Activated B cell treated with CpG ODN at 0.5 μM for 24 hours (primary cell): ENCODE measurements at regions of chr6 and their contacts with region 1.

Region 1: GRCh38 chr6:144181639-144182038 is 31.3 kb downstream of the STX11 start:
- DNase-seq: no peak
- ATAC-seq: no peak
- H3K4me3 Mint-ChIP-seq: no peak overlapping the region
- H3K27ac Mint-ChIP-seq: no peak overlapping the region
- H3K4me1 Mint-ChIP-seq: peaks cover 30% of the 10 kb centered on the region
- H3K27me3 Mint-ChIP-seq: no peaks in the 10 kb centered on the region
- CTCF ChIP-seq: no peak

Region 2: DNA sequence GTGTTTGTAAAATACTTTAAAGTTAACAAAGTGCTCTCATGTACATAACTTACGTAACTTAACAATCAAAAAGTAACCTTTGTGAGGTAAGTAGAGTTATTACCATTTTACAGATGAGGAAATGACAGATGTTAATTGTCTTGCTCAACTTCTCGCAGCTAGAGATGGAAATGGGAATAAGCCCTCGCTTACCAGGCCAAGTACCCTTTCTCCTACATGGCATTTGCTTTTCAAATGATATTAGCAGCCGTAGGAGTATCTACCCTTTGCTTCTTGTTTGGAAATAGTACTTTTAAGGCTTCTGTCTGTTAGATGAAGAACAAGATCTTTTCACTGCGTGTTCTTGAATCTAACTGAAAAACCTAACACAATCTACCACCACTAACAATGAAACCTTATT is 15.9 kb before region 1 on chr6:
- CTCF ChIA-PET with region 1: no interaction called
- POLR2A ChIA-PET with region 1: no interaction called
- intact Hi-C with region 1: loop called (anchors 2 kb)
- DNase-seq: no peak
- ATAC-seq: no peak
- H3K4me3 Mint-ChIP-seq: no peak overlapping the region
- H3K27ac Mint-ChIP-seq: no peak overlapping the region
- H3K4me1 Mint-ChIP-seq: peaks cover 15% of the 10 kb centered on the region
- H3K27me3 Mint-ChIP-seq: no peaks in the 10 kb centered on the region
- CTCF ChIP-seq: no peak